Heart right ventricle (tissue), 16 donors: ENCODE measurements at regions of chr7 and their contacts with region 1.

Region 1: GRCh38 chr7:150845421-150845861 is 6.9 kb upstream of the AOC1 start:
- DNase-seq: peak; percentile 60 to 61
- ATAC-seq: peak; percentile 56 to 91 (median 86)
- H3K4me3 ChIP-seq: no peak overlapping the region
- H3K27ac ChIP-seq: peak overlapping the region in 3 of 10 donors; percentile 7 to 62 (median 23)
- H3K4me1 ChIP-seq: peaks cover 0 to 18% (median 6%) of the 10 kb centered on the region in 9 donors
- H3K27me3 ChIP-seq: no peaks in the 10 kb centered on the region
- CTCF ChIP-seq: no peak

Region 2: GRCh38 chr7:150586785-150587152 is 258.7 kb before region 1 on chr7:
- intact Hi-C with region 1: no loop called
- DNase-seq: peak in 1 of 2 donors; percentile 49
- ATAC-seq: peak; percentile 89 to 97 (median 93)
- H3K4me3 ChIP-seq: peak overlapping the region in 2 of 10 donors; percentile 14 to 25
- H3K27ac ChIP-seq: peak overlapping the region; percentile 59 to 95 (median 78)
- H3K4me1 ChIP-seq: peaks cover 0 to 41% (median 29%) of the 10 kb centered on the region in 9 donors
- H3K27me3 ChIP-seq: no peaks in the 10 kb centered on the region
- CTCF ChIP-seq: no peak

Region 3: DNA sequence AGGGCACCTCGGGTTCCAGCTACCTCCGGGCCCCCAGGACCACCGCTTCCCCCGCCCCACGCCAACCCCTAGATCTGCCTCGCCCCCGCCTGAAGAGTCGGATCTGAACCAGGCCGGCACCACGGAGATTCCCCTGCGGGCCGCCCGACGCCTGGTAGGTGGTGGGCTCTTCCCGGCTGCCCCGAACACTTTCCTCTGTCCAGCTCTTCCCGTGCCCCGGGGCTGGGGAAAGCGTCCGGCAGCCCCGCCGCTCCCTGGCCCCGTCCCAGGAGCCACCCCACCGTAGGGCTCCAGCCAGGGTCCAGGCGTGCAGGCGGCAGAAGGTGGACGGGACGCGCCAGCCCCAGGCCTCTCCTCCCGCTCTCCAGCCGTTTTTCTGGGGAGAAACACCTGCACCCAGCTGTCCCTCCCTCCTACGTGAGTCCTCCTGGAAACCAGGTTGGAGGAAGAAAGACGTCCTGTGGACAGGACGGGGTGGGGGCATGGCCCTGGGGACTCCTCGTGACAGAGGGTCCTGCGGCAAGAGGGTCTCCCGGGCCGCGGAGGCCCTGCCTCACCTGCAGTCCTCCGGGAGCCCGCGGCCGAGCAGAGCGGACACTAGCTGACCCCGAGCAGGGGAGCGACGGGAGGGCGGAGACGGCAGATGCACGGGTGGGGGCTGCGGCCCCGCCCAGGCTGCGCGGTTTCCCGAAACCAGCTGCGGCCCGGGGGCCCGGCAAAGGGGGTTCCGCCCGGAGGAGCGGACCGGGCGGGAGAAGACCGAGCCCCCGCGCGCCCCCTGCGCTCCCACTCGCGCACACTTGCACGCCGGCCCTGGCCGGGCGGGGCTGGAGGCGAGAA is 45.5 kb before region 1 on chr7 and contains the start of gene TMEM176B:
- intact Hi-C with region 1: loop called in 1 of 10 experiments (anchors 5 kb)
- DNase-seq: peak; percentile 50 to 72
- ATAC-seq: peak; percentile 82 to 90 (median 88)
- H3K4me3 ChIP-seq: peak within 1 kb of the TSS; percentile 42 to 76 (median 66)
- H3K27ac ChIP-seq: peak within 1 kb of the TSS in 9 of 10 donors; percentile 40 to 81 (median 66)
- H3K4me1 ChIP-seq: peaks cover 0 to 44% (median 17%) of the 10 kb centered on the region in 9 donors
- H3K27me3 ChIP-seq: peaks cover 0 to 50% (median 25%) of the 10 kb centered on the region in 7 donors
- CTCF ChIP-seq: no peak
- total RNA-seq, gene TMEM176B: 19.6 to 149 (median 52.6) TPM